Gastrocnemius medialis (tissue), 4 donors: ENCODE measurements at regions of chr2 and their contacts with region 1.

Region 1: GRCh38 chr2:203683932-203684556 is 22.4 kb upstream of the CD28 start:
- DNase-seq: peak in 1 of 2 donors; percentile 52
- ATAC-seq: peak; percentile 28 to 51
- H3K4me3 ChIP-seq: no peak overlapping the region
- H3K27ac ChIP-seq: peak overlapping the region; percentile 71 to 79 (median 76)
- H3K4me1 ChIP-seq: peaks cover 56 to 70% of the 10 kb centered on the region in 2 donors
- H3K27me3 ChIP-seq: no peaks in the 10 kb centered on the region
- CTCF ChIP-seq: no peak
- POLR2A ChIP-seq: no peak

Region 2: DNA sequence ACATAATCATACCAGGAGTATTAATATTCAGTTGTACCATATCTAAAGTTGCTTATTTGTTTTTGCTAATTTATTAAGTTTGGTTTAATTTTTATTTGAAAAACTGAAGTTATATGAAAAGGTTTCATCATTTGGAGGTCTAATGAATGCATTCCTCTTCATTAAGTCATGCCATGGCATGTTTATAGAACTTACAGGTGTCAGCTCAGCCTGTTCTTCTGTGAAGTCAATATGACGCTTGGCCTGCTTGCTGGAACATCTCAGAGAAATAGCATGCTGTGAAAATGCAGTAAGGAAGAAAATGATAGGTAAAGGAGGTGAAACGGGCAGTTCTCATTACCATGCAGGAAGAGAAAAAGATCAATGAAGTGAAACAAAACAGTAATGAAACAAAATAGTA is 207.2 kb before region 1 on chr2:
- in situ Hi-C with region 1: no loop called
- intact Hi-C with region 1: no loop called
- DNase-seq: no peak
- ATAC-seq: no peak
- H3K4me3 ChIP-seq: no peak overlapping the region
- H3K27ac ChIP-seq: no peak overlapping the region
- H3K4me1 ChIP-seq: no peaks in the 10 kb centered on the region
- H3K27me3 ChIP-seq: no peaks in the 10 kb centered on the region
- CTCF ChIP-seq: no peak
- POLR2A ChIP-seq: no peak

Region 3: GRCh38 chr2:203728321-203728720 is 44.3 kb after region 1 on chr2:
- in situ Hi-C with region 1: no loop called
- intact Hi-C with region 1: loop called (anchors 5 kb)
- DNase-seq: no peak
- ATAC-seq: no peak
- H3K4me3 ChIP-seq: no peak overlapping the region
- H3K27ac ChIP-seq: no peak overlapping the region
- H3K4me1 ChIP-seq: peaks cover 9 to 38% of the 10 kb centered on the region in 2 donors
- H3K27me3 ChIP-seq: no peaks in the 10 kb centered on the region
- CTCF ChIP-seq: no peak
- POLR2A ChIP-seq: no peak

Region 4: DNA sequence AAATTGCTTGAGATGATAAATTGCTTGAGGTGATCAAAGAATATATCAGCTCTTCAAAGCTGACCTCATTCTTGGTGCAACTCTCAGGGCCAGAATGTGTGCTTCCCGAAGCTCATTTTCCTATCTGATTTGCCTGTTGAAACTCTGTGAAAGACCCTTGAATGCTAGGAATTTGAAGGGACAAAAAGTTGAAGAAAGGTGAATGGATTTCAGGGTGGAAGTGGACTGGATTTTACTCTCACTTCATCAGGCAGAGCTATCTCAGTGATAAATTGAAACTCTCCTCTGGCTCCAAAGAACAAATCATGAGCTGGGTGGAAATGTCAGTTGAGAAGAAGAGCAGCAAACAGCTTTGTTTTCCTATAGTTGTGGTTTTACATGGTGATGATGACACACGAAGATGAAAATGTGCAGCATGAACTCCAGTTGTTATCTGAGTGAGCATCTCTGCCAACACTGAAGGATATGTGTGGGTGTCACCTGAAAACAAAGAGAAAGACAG is 56.8 kb after region 1 on chr2:
- in situ Hi-C with region 1: no loop called
- intact Hi-C with region 1: loop called (anchors 5 kb)
- DNase-seq: no peak
- ATAC-seq: no peak
- H3K4me3 ChIP-seq: no peak overlapping the region
- H3K27ac ChIP-seq: peak overlapping the region in 2 of 4 donors; percentile 20 to 38
- H3K4me1 ChIP-seq: peaks cover 3 to 16% of the 10 kb centered on the region in 2 donors
- H3K27me3 ChIP-seq: no peaks in the 10 kb centered on the region
- CTCF ChIP-seq: no peak
- POLR2A ChIP-seq: no peak

Region 5: GRCh38 chr2:203934041-203934492 is 250.0 kb after region 1 on chr2:
- in situ Hi-C with region 1: no loop called
- intact Hi-C with region 1: no loop called
- DNase-seq: no peak
- ATAC-seq: no peak
- H3K4me3 ChIP-seq: no peak overlapping the region
- H3K27ac ChIP-seq: no peak overlapping the region
- H3K4me1 ChIP-seq: no peaks in the 10 kb centered on the region
- H3K27me3 ChIP-seq: no peaks in the 10 kb centered on the region
- CTCF ChIP-seq: no peak
- POLR2A ChIP-seq: no peak